IMR-90 (cell line): ENCODE measurements at regions of chr4 and their contacts with region 1.

Region 1: DNA sequence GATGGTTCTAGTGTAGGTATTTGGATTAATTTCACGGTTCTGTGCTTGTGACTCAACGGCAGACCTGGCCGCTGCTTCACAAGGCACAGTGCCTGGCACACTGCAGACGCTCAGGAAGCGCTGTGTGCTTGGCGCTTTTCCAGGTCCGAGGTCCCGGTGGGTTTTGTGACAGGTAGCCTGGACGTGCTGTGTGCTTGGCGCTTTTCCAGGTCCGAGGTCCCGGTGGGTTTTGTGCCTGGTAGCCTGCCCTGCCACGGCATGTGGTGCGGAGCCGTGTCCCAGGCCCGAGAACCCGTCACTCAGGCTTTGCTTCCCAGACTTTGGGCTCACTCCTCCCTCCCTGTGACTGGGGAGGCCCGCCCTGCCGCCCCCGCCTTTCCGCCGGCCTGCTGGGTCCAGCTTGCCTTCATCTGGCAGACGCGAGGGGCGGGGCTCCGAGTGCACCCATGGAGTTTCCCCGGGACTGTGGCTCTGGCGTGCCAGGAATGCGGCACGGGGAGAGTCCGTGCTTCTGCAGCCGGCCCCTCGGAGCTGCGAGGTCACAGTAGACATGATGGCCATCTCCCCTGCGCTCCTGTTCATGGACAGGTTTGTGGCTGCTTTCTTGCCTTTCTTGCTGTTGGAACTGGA is 44.2 kb downstream of the TBC1D14 start:
- DNase-seq: peak; percentile 62
- ATAC-seq: peak; percentile 71
- H3K4me3 ChIP-seq: no peak overlapping the region
- H3K27ac ChIP-seq: peak overlapping the region; percentile 37; the same call in 1 of the 2 replicates
- H3K4me1 ChIP-seq: peaks cover 15% of the 10 kb centered on the region
- H3K27me3 ChIP-seq: no peaks in the 10 kb centered on the region
- CTCF ChIP-seq: no peak
- POLR2A ChIP-seq: no peak
- RAD21 ChIP-seq: no peak

Region 2: GRCh38 chr4:6926681-6927478 is 27.0 kb before region 1 on chr4:
- CTCF ChIA-PET with region 1: no interaction called
- POLR2A ChIA-PET with region 1: interaction called, 19 read pairs
- dilution Hi-C with region 1: no loop called
- in situ Hi-C with region 1: no loop called
- intact Hi-C with region 1: no loop called
- DNase-seq: peak; percentile 60
- ATAC-seq: peak; percentile 90
- H3K4me3 ChIP-seq: no peak overlapping the region
- H3K27ac ChIP-seq: no peak overlapping the region
- H3K4me1 ChIP-seq: peaks cover 14% of the 10 kb centered on the region
- H3K27me3 ChIP-seq: no peaks in the 10 kb centered on the region
- CTCF ChIP-seq: no peak
- POLR2A ChIP-seq: no peak
- RAD21 ChIP-seq: no peak

Region 3: DNA sequence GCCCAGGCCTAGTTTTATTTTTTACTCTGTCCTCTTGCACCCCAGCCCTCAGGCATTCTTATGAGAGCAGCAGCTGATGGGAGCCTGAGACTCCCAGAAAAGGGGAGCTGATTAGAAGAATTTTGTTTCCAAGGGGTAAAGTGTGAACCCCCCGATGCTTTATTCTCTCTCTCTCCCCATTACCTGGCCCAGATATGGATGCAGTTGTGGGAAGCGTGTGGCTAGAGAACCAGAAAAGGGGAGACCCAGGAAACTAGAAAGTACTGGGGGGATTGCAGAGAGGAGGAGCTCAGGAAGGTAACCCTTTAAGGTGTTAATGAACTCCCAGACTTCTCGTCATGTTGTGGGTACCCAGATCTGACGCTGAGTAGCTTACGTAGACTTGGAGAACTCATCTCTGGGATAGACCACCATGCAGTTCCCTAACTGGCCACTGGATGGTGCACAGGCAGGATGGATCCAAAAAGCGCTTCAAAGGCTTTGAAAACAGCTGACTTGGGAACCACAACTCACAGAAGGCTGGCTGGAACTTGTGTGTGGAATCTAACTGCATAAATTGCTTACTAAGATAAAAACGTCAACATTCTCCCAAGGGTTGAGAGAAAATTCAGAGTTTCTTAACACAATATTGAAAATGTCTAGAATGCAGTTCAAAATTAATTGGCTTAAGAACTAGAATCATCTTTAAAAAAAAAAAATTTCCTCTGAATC is 20.4 kb after region 1 on chr4:
- CTCF ChIA-PET with region 1: interaction called, 3 read pairs
- POLR2A ChIA-PET with region 1: no interaction called
- dilution Hi-C with region 1: no loop called
- in situ Hi-C with region 1: no loop called
- intact Hi-C with region 1: loop called (anchors 2 kb)
- DNase-seq: peak; percentile 84
- ATAC-seq: peak; percentile 99
- H3K4me3 ChIP-seq: no peak overlapping the region
- H3K27ac ChIP-seq: no peak overlapping the region
- H3K4me1 ChIP-seq: 0 out of 2 replicates have a peak, but pooled peaks cover 1% of the 10 kb centered on the region
- H3K27me3 ChIP-seq: no peaks in the 10 kb centered on the region
- CTCF ChIP-seq: peak; percentile 88
- POLR2A ChIP-seq: no peak
- RAD21 ChIP-seq: peak; percentile 80